Mammary epithelial cell (primary cell): ENCODE measurements at regions of chr3 and their contacts with region 1.

Region 1: DNA sequence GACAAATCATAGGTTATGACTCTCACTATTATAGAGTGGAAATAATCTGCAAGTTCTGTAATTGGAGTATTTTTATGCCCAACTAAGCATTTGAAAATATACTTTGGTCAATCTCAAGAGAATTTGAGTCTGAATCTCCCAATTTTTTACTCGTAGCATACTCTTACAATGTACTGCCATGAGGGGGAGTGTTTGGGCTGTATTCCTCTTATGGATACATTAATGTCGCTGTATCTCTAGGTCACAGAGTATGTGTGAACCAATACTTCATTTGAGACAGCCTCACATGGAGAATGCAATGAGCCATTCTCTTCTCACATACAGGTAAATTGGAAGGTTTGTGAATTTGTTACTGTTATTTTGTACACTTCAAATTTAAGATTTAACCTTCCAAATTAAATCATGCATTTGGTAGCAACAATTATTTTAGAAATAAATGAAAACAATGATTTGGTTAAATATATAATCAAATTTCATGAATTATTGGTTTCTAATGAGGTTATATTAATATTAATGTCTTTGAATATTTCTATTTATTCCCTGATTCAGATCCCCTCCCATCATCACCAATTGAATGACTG is 5.5 kb upstream of the CD200 start:
- DNase-seq: peak; percentile 61
- H3K4me3 ChIP-seq: no peak overlapping the region
- H3K27ac ChIP-seq: no peak overlapping the region
- H3K4me1 ChIP-seq: no peaks in the 10 kb centered on the region
- H3K27me3 ChIP-seq: no peaks in the 10 kb centered on the region
- CTCF ChIP-seq: peak; percentile 72 to 76

Region 2: DNA sequence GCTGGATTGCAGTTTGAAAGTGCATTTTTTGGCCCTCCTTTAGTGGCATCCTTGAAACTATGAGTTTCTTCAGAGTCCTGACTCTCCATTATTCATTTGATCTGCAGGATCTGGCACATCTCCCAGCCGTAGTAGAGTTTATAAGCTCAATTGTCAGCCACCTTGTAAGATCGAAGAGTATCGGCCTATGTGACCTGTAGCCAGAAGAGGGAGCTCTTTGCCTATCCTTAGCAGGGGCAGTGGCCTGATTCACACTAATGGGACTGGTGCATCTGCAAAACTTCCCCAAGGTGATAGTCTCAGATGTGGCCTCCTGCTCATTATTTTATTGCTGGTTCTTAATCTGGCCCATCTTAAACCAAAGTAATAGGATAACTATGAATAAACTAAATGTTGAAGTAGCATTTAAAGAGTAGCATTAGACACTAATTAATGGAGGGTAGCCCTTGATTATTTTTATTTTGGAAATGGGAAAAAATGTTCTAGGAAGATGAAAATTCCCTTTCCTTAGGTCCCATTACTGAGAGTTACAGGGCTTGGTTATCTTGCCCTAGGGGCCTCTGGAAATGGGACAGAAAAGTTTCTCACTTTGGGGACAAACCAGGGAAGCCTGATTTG is 215.6 kb before region 1 on chr3:
- CTCF ChIA-PET with region 1: no interaction called
- dilution Hi-C with region 1: no loop called
- in situ Hi-C with region 1: no loop called
- intact Hi-C with region 1: loop called (anchors 5 kb)
- DNase-seq: peak; percentile 71
- H3K4me3 ChIP-seq: no peak overlapping the region
- H3K27ac ChIP-seq: no peak overlapping the region
- H3K4me1 ChIP-seq: no peaks in the 10 kb centered on the region
- H3K27me3 ChIP-seq: no peaks in the 10 kb centered on the region
- CTCF ChIP-seq: peak; percentile 88

Region 3: GRCh38 chr3:112149136-112149535 is 178.3 kb before region 1 on chr3:
- CTCF ChIA-PET with region 1: no interaction called
- dilution Hi-C with region 1: no loop called
- in situ Hi-C with region 1: no loop called
- intact Hi-C with region 1: no loop called
- DNase-seq: peak; percentile 93
- H3K4me3 ChIP-seq: no peak overlapping the region
- H3K27ac ChIP-seq: peak overlapping the region; percentile 57
- H3K4me1 ChIP-seq: peaks cover 19% of the 10 kb centered on the region
- H3K27me3 ChIP-seq: no peaks in the 10 kb centered on the region
- CTCF ChIP-seq: no peak

Region 4: DNA sequence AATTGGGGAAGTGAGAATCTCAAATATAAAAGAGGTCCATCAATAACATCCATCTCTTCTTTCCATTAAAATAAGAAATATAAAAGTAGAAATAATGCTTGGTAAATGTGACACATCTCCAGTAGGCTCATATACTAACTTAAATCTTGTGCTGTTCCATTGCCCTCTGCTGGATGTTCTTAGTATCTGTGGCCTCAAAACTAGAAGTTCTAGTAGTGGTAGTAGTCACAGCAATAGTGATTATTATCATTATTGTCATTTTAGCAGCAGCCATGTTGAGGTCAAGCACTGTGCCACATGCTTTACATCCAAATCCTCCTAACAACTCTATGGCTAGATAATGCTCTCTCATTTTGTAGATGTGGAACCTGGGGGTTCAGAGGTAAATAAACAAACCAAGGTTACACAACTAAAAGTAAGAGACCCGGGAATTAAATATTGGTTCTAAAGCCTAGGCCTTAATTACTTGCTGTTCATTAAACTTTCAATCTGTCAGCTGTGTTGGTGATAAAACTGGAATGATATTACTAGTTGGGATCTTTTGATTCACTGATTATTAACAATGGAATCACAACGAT is 192.1 kb after region 1 on chr3:
- CTCF ChIA-PET with region 1: no interaction called
- dilution Hi-C with region 1: loop called (anchors 25 kb)
- in situ Hi-C with region 1: loop called in 1 of 2 experiments (anchors 5 kb)
- intact Hi-C with region 1: loop called (anchors 1 kb)
- DNase-seq: peak; percentile 58
- H3K4me3 ChIP-seq: no peak overlapping the region
- H3K27ac ChIP-seq: no peak overlapping the region
- H3K4me1 ChIP-seq: no peaks in the 10 kb centered on the region
- H3K27me3 ChIP-seq: no peaks in the 10 kb centered on the region
- CTCF ChIP-seq: peak; percentile 74 to 76